CD8-positive, alpha-beta T cell (primary cell): ENCODE measurements at regions of chrX and their contacts with region 1.

Region 1: GRCh38 chrX:106415276-106415895 is 196.4 kb upstream of the RADX start:
- DNase-seq: peak in 3 of 9 experiments; percentile 6 to 19 (median 17)
- ATAC-seq: no peak
- H3K4me3 ChIP-seq: no peak overlapping the region
- H3K4me3 Mint-ChIP-seq: no peak overlapping the region
- H3K27ac ChIP-seq: no peak overlapping the region
- H3K27ac Mint-ChIP-seq: no peak overlapping the region
- H3K4me1 ChIP-seq: no peaks in the 10 kb centered on the region
- H3K4me1 Mint-ChIP-seq: no peaks in the 10 kb centered on the region
- H3K27me3 ChIP-seq: no peaks in the 10 kb centered on the region
- H3K27me3 Mint-ChIP-seq: no peaks in the 10 kb centered on the region
- CTCF ChIP-seq: peak; percentile 26

Region 2: DNA sequence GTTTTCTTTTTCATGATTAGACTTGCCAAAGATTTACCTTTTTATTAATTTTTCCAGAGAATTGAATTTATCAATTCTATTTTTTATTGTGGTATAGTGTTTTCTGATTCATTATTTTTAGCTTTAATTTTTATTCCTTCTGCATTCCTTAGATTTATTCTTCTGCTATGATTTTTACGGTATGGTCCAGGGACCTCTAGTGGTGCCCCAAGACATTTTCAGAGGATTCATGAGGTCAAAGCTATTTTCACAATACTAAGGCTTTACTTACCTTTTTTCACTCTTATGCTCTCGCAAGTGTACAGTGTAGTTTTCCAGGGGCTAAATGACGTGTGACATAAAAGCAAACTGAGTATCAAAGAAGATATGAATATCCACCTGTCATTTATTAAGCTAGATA is 204.4 kb after region 1 on chrX:
- CTCF ChIA-PET with region 1: no interaction called
- POLR2A ChIA-PET with region 1: no interaction called
- intact Hi-C with region 1: loop called in 1 of 2 experiments (anchors 5 kb)
- DNase-seq: peak in 2 of 9 experiments; percentile 14 to 19
- ATAC-seq: no peak
- H3K4me3 ChIP-seq: no peak overlapping the region
- H3K4me3 Mint-ChIP-seq: no peak overlapping the region
- H3K27ac ChIP-seq: no peak overlapping the region
- H3K27ac Mint-ChIP-seq: no peak overlapping the region
- H3K4me1 ChIP-seq: no peaks in the 10 kb centered on the region
- H3K4me1 Mint-ChIP-seq: peaks cover 2% of the 10 kb centered on the region
- H3K27me3 ChIP-seq: no peaks in the 10 kb centered on the region
- H3K27me3 Mint-ChIP-seq: no peaks in the 10 kb centered on the region
- CTCF ChIP-seq: peak; percentile 30

Region 3: DNA sequence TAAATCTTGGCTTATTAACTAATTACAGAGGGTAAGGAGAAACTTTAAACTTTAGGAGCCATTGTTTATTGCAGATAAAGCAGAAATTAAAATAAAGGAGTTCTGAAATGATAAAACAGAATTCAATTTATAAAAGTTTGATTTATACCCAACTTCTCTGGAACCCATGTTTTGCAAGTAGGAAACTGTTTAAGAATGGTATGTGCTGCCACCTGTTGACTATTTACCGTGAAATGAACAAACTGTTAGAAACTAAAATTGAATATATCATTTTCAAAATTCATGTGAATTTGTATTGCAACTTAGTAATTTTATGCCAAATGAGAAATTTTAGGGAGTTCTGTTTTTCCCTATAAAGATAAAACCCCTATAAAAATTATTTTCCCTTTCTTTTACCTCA is 376.1 kb after region 1 on chrX:
- CTCF ChIA-PET with region 1: no interaction called
- POLR2A ChIA-PET with region 1: no interaction called
- intact Hi-C with region 1: loop called in 1 of 2 experiments (anchors 10 kb)
- DNase-seq: peak in 2 of 9 experiments; percentile 22 to 25
- ATAC-seq: no peak
- H3K4me3 ChIP-seq: no peak overlapping the region
- H3K4me3 Mint-ChIP-seq: no peak overlapping the region
- H3K27ac ChIP-seq: no peak overlapping the region
- H3K27ac Mint-ChIP-seq: no peak overlapping the region
- H3K4me1 ChIP-seq: no peaks in the 10 kb centered on the region
- H3K4me1 Mint-ChIP-seq: no peaks in the 10 kb centered on the region
- H3K27me3 ChIP-seq: no peaks in the 10 kb centered on the region
- H3K27me3 Mint-ChIP-seq: no peaks in the 10 kb centered on the region
- CTCF ChIP-seq: no peak